Activated CD4-positive, alpha-beta T cell treated with anti-CD3 and anti-CD28 coated beads, Interleukin-2, amount 10 ng/mL, durations not matched to agents 24 days and 14 days (primary cell): ENCODE measurements at regions of chr5 and their contacts with region 1.

Region 1: GRCh38 chr5:34022121-34022705 is 14.4 kb upstream of the AMACR start:
- DNase-seq: peak; percentile 83
- H3K4me3 Mint-ChIP-seq: peak overlapping the region; percentile 39
- H3K27ac Mint-ChIP-seq: peak overlapping the region; percentile 93
- H3K4me1 Mint-ChIP-seq: peaks cover 24% of the 10 kb centered on the region
- H3K27me3 Mint-ChIP-seq: no peaks in the 10 kb centered on the region

Region 2: GRCh38 chr5:33969572-33970452 is 52.4 kb before region 1 on chr5:
- intact Hi-C with region 1: loop called (anchors 2 kb)
- DNase-seq: peak; percentile 71
- H3K4me3 Mint-ChIP-seq: no peak overlapping the region
- H3K27ac Mint-ChIP-seq: no peak overlapping the region
- H3K4me1 Mint-ChIP-seq: peaks cover 13% of the 10 kb centered on the region
- H3K27me3 Mint-ChIP-seq: peaks cover 6% of the 10 kb centered on the region

Region 3: GRCh38 chr5:34007621-34008600 is 14.3 kb before region 1 on chr5 and contains the start of gene AMACR:
- intact Hi-C with region 1: loop called (anchors 1 kb)
- DNase-seq: peak; percentile 97
- H3K4me3 Mint-ChIP-seq: peak within 1 kb of the TSS; percentile 88
- H3K27ac Mint-ChIP-seq: peak within 1 kb of the TSS; percentile 91
- H3K4me1 Mint-ChIP-seq: peaks cover 27% of the 10 kb centered on the region
- H3K27me3 Mint-ChIP-seq: peaks cover 2% of the 10 kb centered on the region
- total RNA-seq, gene AMACR: 6.4 and 7.7 TPM in 2 replicates